ENCODE measurements at regions of chr12 and their contacts with region 1.

Region 1: DNA sequence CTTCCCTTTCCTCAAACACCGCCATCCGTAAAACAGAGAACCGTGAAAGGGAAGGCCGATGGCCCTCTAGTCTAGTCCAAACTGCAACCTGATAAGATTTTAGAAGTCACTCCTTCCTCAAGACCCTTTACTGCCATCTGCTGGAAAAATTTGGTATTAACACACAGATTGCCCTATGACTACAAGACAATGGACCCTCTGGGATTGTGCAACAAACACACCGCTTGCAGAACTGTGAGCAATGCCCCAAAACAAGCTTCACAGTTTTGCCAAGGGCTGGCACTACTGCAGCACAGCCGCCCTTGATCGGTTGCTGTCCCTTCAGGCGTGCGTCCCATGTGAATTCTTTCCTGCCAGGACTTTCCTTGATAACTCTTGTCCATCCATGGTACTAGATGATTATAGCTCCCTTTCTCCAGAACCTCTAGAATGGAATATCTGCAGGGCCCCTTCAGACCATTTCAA is 23.1 kb downstream of the LLPH start:
- DNase-seq: peak; percentile 80
- H3K4me3 ChIP-seq: no peak overlapping the region
- CTCF ChIP-seq: peak; percentile 54

Region 2: DNA sequence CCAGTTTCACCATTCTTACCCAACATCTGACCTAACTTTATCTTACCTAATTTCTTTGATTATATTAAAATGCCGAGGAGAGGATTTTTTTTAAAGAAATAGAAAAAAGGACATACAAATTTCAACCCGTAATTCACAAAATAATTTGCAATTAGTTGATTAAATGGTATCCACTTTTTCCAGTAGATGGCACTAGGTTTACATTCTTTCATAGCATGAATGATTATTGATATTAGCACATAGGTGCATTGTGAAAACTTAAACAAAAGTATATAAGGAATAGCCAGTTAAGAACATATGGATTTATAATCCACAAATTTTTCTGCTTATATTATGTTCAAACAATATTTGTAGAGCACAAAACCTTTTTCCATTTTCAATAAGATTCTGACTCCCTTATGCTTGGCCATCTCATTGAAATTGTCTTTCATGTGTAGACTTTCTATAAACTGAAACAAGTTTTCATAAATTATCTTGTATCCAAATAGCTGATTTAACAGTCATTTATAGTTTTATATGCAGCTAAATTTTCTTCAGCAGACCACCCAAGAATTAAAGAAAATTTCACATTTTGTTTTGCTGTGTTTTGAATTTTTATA is 793.7 kb before region 1 on chr12:
- CTCF ChIA-PET with region 1: interaction called, 20 read pairs
- POLR2A ChIA-PET with region 1: no interaction called
- DNase-seq: no peak
- H3K4me3 ChIP-seq: no peak overlapping the region
- CTCF ChIP-seq: peak; percentile 11

Region 3: DNA sequence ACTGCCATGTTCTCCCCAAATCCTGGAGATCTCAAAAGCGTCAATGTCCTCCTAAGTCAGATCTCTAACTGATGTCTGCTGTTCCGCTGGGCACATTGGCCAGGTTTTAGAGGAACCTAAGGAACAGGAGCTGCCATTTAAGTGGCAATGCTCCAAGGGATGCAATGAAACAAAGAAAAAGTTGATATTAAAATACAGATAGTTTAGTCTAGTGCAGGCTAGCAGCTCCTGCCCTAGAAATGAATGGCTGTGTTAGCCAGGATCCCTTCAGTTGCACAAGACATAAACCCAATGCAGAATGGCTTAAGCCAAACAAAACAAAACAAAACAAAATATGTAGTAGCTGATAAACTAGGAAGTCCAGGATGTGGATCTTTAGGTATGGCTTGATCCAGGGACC is 139.1 kb before region 1 on chr12:
- CTCF ChIA-PET with region 1: no interaction called
- POLR2A ChIA-PET with region 1: no interaction called
- DNase-seq: no peak
- H3K4me3 ChIP-seq: no peak overlapping the region
- CTCF ChIP-seq: no peak

Region 4: DNA sequence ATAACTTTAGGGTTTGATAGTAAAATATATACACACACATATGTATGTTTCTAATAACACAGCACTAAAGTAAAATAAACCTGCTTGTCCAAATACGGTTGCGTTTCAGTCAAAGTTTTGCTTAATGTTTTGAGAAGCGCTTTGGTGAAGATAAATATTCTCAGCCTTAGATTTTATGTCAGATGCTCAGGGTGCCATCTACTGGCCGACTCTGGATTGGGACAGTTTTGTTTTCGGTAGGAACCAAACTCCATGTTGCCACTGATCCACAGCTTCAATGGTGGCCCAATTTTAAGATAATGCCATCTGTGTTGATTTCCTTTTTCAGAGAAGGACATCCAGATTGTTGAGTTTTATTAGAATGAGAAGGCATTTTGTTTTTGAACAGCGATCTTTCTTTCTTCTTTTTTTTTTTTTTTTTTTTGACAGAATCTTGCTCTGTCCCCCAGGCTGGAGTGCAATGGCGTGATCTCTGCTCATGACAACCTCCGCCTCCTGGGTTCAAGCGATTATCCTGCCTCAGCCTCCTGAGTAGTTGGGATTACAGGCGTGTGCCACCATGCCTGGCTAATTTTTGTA is 20.0 kb before region 1 on chr12:
- CTCF ChIA-PET with region 1: interaction called, 42 read pairs
- POLR2A ChIA-PET with region 1: interaction called, 4 read pairs
- DNase-seq: no peak
- H3K4me3 ChIP-seq: no peak overlapping the region
- CTCF ChIP-seq: peak; percentile 65

Region 5: DNA sequence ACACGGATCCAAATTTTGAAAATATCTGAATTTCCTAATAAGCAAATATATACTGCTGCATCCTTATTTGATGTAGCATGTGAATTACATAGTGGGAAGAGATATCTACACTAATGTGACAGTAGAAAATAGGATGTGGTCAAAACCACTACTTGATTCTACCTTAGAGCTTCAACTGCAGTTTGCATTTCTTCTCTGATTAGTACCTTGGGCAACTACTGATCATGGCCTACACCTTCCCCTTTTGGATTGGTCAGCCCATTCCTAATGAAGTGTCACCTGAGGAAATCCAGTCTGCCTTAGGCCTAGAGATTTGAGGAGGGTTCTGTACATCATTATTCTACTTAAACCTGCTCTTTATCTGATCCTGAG is 12.4 kb after region 1 on chr12:
- CTCF ChIA-PET with region 1: interaction called, 36 read pairs
- POLR2A ChIA-PET with region 1: no interaction called
- DNase-seq: no peak
- H3K4me3 ChIP-seq: no peak overlapping the region
- CTCF ChIP-seq: no peak

Measured in AG04449 (cell line).